ENCODE measurements at regions of chr5 and their contacts with region 1.

Region 1: GRCh38 chr5:150458819-150459557 is 9.4 kb upstream of the RPS14 start:
- DNase-seq: peak; percentile 39
- H3K4me3 ChIP-seq: peak overlapping the region in 1 of 3 experiments; percentile 9
- H3K27ac ChIP-seq: no peak overlapping the region
- H3K4me1 ChIP-seq: peaks cover 7% of the 10 kb centered on the region
- H3K27me3 ChIP-seq: no peaks in the 10 kb centered on the region
- CTCF ChIP-seq: peak; percentile 58 to 84

Region 2: GRCh38 chr5:150066901-150067396 is 392.0 kb before region 1 on chr5:
- CTCF ChIA-PET with region 1: no interaction called
- dilution Hi-C with region 1: no loop called
- in situ Hi-C with region 1: no loop called
- intact Hi-C with region 1: no loop called
- DNase-seq: peak; percentile 60
- H3K4me3 ChIP-seq: no peak overlapping the region
- H3K27ac ChIP-seq: no peak overlapping the region
- H3K4me1 ChIP-seq: peaks cover 10% of the 10 kb centered on the region
- H3K27me3 ChIP-seq: no peaks in the 10 kb centered on the region
- CTCF ChIP-seq: no peak

Region 3: DNA sequence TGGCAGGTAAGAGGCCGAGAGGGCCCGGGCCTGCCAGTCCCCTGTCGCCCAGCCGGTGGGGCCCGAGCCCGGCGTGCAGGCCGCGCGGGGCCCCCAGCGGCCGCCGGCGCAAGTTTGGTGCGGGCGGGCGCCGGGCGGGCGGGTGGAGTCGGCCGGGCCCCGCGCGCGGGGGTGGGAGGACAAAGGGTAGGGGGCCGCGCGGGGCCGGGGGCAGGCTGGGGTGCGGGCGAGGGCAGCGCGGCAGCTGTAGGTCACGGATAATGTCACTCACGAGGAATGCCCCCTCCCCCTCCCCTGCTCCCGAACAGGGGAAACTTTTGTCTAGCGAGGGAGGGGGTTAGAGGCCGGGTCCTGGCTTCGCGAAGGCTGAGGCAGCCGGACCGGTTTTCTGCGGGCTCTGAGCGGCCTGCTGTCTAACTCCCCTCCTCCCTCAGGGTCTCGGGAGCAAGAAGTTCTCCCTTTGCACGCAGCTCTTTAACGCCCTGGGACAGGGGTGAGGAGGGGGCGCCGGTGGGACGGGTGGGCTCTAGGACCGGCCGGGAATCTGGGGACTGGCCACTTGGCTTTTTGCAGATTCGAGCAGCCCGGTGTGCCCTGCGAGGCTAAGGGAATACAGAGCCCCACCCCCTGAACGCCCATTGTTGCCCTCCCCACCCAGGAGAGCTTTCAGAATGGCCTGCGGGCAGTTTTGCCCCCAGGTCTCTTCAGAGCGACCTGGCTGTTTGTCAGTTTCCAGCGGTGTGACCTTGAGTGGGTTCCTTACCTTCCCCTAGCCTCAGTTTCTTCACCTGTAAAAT is 27.6 kb after region 1 on chr5:
- CTCF ChIA-PET with region 1: no interaction called
- dilution Hi-C with region 1: no loop called
- in situ Hi-C with region 1: no loop called
- intact Hi-C with region 1: loop called (anchors 2 kb)
- DNase-seq: peak; percentile 68
- H3K4me3 ChIP-seq: peak overlapping the region; percentile 71 to 91 (median 89)
- H3K27ac ChIP-seq: peak overlapping the region; percentile 44
- H3K4me1 ChIP-seq: peaks cover 51% of the 10 kb centered on the region
- H3K27me3 ChIP-seq: no peaks in the 10 kb centered on the region
- CTCF ChIP-seq: no peak

Region 4: GRCh38 chr5:150544611-150545219 is 85.7 kb after region 1 on chr5:
- CTCF ChIA-PET with region 1: interaction called, 3 read pairs
- dilution Hi-C with region 1: no loop called
- in situ Hi-C with region 1: loop called in 1 of 2 experiments (anchors 5 kb)
- intact Hi-C with region 1: loop called (anchors 1 kb)
- DNase-seq: peak; percentile 44
- H3K4me3 ChIP-seq: no peak overlapping the region
- H3K27ac ChIP-seq: no peak overlapping the region
- H3K4me1 ChIP-seq: peaks cover 27% of the 10 kb centered on the region
- H3K27me3 ChIP-seq: no peaks in the 10 kb centered on the region
- CTCF ChIP-seq: peak; percentile 74 to 94

Region 5: DNA sequence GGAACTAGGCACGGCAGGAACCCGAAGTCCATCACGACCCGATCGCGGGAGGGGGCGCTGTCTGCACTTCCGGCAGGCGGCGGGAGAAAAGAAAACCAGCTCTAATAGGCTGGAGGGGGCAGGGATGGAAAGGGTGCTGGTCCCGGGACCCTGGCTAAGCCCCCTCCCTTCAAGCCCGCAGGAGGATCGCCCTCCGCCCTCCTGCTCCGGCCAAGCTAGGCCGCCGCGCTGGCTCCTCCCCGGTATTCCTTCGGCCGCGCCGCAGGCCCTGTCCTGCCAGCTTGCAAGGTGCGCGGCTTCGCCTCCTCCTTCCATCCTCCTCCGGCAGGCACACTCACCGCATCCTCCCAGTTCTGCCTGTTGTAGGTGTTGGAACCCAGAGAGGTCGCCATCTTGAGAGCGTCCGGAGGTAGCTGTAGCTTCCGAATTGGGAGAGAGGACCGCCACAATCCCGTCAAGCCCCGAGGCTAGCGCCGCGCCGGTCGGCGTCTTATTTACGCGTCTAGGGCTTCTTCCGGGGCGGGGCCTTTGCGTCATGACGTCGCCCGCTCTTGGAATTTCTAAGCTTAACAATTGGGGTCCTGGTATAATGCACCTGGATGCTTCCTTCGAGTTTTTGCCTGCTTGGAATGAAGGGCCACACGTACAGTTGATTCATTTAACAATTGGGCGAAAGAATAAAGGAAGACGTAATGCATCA is 241.8 kb after region 1 on chr5 and contains the start of gene RBM22:
- CTCF ChIA-PET with region 1: no interaction called
- dilution Hi-C with region 1: no loop called
- in situ Hi-C with region 1: no loop called
- intact Hi-C with region 1: loop called (anchors 2 kb)
- DNase-seq: peak; percentile 83
- H3K4me3 ChIP-seq: peak within 1 kb of the TSS; percentile 73 to 97 (median 84)
- H3K27ac ChIP-seq: peak within 1 kb of the TSS; percentile 78
- H3K4me1 ChIP-seq: peaks cover 11% of the 10 kb centered on the region
- H3K27me3 ChIP-seq: no peaks in the 10 kb centered on the region
- CTCF ChIP-seq: peak; percentile 22 to 74
- total RNA-seq, gene RBM22: 28.5 to 34.7 TPM